CD4-positive, alpha-beta T cell (primary cell): ENCODE measurements at regions of chr11 and their contacts with region 1.

Region 1: GRCh38 chr11:73376160-73376802 is at the start of gene RELT:
- DNase-seq: peak; percentile 79 to 97 (median 93)
- ATAC-seq: peak; percentile 94
- H3K4me3 ChIP-seq: peak within 1 kb of the TSS; percentile 84
- H3K4me3 Mint-ChIP-seq: peak within 1 kb of the TSS; percentile 93
- H3K27ac ChIP-seq: peak within 1 kb of the TSS; percentile 78 to 91
- H3K27ac Mint-ChIP-seq: peak within 1 kb of the TSS; percentile 88
- H3K4me1 ChIP-seq: peaks cover 58% of the 10 kb centered on the region
- H3K4me1 Mint-ChIP-seq: peaks cover 42% of the 10 kb centered on the region
- H3K27me3 ChIP-seq: no peaks in the 10 kb centered on the region
- H3K27me3 Mint-ChIP-seq: no peaks in the 10 kb centered on the region
- CTCF ChIP-seq: peak; percentile 86
- total RNA-seq, gene RELT: 107 to 114 TPM

Region 2: DNA sequence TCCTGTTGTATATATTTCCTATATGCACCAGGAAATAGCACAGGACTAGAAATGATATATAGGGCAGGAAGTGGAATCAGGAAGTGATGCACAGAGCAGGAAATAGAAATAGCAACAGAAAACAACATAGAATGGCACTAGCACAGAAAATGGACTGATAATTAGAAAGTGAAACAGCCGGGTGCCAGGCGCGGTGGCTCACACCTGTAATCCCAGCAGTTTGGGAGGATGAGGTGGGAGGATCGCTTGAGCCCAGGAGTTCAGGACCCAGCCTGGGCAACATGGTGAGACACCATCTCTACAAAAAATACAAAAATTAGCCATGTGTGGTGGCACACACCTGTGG is 10.0 kb before region 1 on chr11:
- CTCF ChIA-PET with region 1: no interaction called
- POLR2A ChIA-PET with region 1: interaction called, 9 read pairs
- intact Hi-C with region 1: loop called (anchors 1 kb)
- DNase-seq: peak in 6 of 14 experiments; percentile 12 to 86 (median 52)
- ATAC-seq: peak; percentile 93
- H3K4me3 ChIP-seq: peak overlapping the region; percentile 30
- H3K4me3 Mint-ChIP-seq: peak overlapping the region; percentile 40
- H3K27ac ChIP-seq: peak overlapping the region; percentile 48 to 92
- H3K27ac Mint-ChIP-seq: peak overlapping the region; percentile 88
- H3K4me1 ChIP-seq: peaks cover 37% of the 10 kb centered on the region
- H3K4me1 Mint-ChIP-seq: peaks cover 26% of the 10 kb centered on the region
- H3K27me3 ChIP-seq: no peaks in the 10 kb centered on the region
- H3K27me3 Mint-ChIP-seq: no peaks in the 10 kb centered on the region
- CTCF ChIP-seq: no peak

Region 3: GRCh38 chr11:73393479-73394380 is 17.4 kb after region 1 on chr11:
- CTCF ChIA-PET with region 1: no interaction called
- POLR2A ChIA-PET with region 1: interaction called, 4 read pairs
- intact Hi-C with region 1: loop called in 1 of 2 experiments (anchors 2 kb)
- DNase-seq: peak; percentile 52 to 81 (median 62)
- ATAC-seq: peak; percentile 77
- H3K4me3 ChIP-seq: no peak overlapping the region
- H3K4me3 Mint-ChIP-seq: peak overlapping the region; percentile 30
- H3K27ac ChIP-seq: no peak overlapping the region
- H3K27ac Mint-ChIP-seq: peak overlapping the region; percentile 73
- H3K4me1 ChIP-seq: peaks cover 7% of the 10 kb centered on the region
- H3K4me1 Mint-ChIP-seq: peaks cover 4% of the 10 kb centered on the region
- H3K27me3 ChIP-seq: no peaks in the 10 kb centered on the region
- H3K27me3 Mint-ChIP-seq: no peaks in the 10 kb centered on the region
- CTCF ChIP-seq: peak; percentile 77

Region 4: DNA sequence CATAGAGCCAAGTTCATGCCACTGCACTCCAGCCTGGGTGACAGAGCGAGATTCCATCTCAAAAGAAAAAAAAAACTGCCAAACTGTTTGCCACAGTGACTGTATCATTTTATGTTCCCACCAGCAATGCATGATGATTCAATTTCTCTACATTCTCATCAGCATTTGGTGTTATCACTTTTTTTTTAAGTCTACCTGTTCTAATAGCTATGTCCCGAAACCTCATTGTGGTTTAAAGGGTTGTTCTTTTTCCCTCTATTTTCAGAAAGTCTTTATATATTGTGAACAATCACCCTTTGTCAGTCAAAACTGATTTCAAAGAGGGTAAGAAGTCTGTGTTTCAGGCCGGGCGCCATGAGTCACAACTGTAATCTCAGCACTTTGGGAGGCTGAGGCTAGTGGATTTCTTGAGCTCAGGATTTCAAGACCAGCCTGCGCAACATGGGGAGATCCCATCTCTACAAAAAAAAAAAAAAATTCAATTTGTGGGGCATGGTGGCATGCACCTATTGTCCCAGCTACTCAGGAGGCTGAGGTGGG is 236.4 kb after region 1 on chr11:
- CTCF ChIA-PET with region 1: no interaction called
- POLR2A ChIA-PET with region 1: no interaction called
- intact Hi-C with region 1: no loop called
- DNase-seq: no peak
- ATAC-seq: no peak
- H3K4me3 ChIP-seq: no peak overlapping the region
- H3K4me3 Mint-ChIP-seq: no peak overlapping the region
- H3K27ac ChIP-seq: no peak overlapping the region
- H3K27ac Mint-ChIP-seq: no peak overlapping the region
- H3K4me1 ChIP-seq: no peaks in the 10 kb centered on the region
- H3K4me1 Mint-ChIP-seq: no peaks in the 10 kb centered on the region
- H3K27me3 ChIP-seq: no peaks in the 10 kb centered on the region
- H3K27me3 Mint-ChIP-seq: peaks cover 5% of the 10 kb centered on the region
- CTCF ChIP-seq: no peak